Heart left ventricle (tissue), 16 donors: ENCODE measurements at regions of chr3 and their contacts with region 1.

Region 1: GRCh38 chr3:195250473-195251251 is 20.3 kb downstream of the XXYLT1 start:
- DNase-seq: peak in 1 of 5 donors; percentile 61
- ATAC-seq: peak; percentile 30 to 71 (median 66)
- H3K4me3 ChIP-seq: no peak overlapping the region
- H3K27ac ChIP-seq: no peak overlapping the region
- H3K4me1 ChIP-seq: peaks cover 0 to 9% (median 0%) of the 10 kb centered on the region in 12 donors
- H3K27me3 ChIP-seq: no peaks in the 10 kb centered on the region
- CTCF ChIP-seq: peak; percentile 15 to 60 (median 44)
- POLR2A ChIP-seq: no peak

Region 2: GRCh38 chr3:195001961-195002861 is 248.5 kb before region 1 on chr3:
- intact Hi-C with region 1: loop called in 8 of 10 experiments (anchors 5 to 10 kb)
- DNase-seq: peak; percentile 66 to 83 (median 68)
- ATAC-seq: peak; percentile 71 to 82 (median 72)
- H3K4me3 ChIP-seq: peak overlapping the region in 1 of 12 donors; percentile 7
- H3K27ac ChIP-seq: peak overlapping the region in 10 of 12 donors; percentile 3 to 71 (median 33)
- H3K4me1 ChIP-seq: peaks cover 0 to 28% (median 16%) of the 10 kb centered on the region in 12 donors
- H3K27me3 ChIP-seq: no peaks in the 10 kb centered on the region
- CTCF ChIP-seq: peak; percentile 34 to 74 (median 68)
- POLR2A ChIP-seq: no peak

Region 3: GRCh38 chr3:195117978-195118581 is 132.6 kb before region 1 on chr3:
- intact Hi-C with region 1: loop called in 6 of 10 experiments (anchors 5 to 10 kb)
- DNase-seq: no peak
- ATAC-seq: peak in 2 of 4 donors; percentile 37 to 38
- H3K4me3 ChIP-seq: no peak overlapping the region
- H3K27ac ChIP-seq: peak overlapping the region in 4 of 12 donors; percentile 15 to 52 (median 33)
- H3K4me1 ChIP-seq: peaks cover 0 to 36% (median 17%) of the 10 kb centered on the region in 12 donors
- H3K27me3 ChIP-seq: no peaks in the 10 kb centered on the region
- CTCF ChIP-seq: peak in 7 of 12 donors; percentile 6 to 41 (median 28)
- POLR2A ChIP-seq: no peak